Activated CD8-positive, alpha-beta T cell treated with anti-CD3 and anti-CD28 coated beads, Interleukin-2, amount 10 ng/mL, durations not matched to agents 7 days and 5 days (primary cell): ENCODE measurements at regions of chr3 and their contacts with region 1.

Region 1: GRCh38 chr3:100316641-100317069 is 17.9 kb upstream of the NIT2 start:
- DNase-seq: peak; percentile 66
- ATAC-seq: peak; percentile 82
- H3K4me3 Mint-ChIP-seq: no peak overlapping the region
- H3K27ac Mint-ChIP-seq: no peak overlapping the region
- H3K4me1 Mint-ChIP-seq: peaks cover 16% of the 10 kb centered on the region
- H3K27me3 Mint-ChIP-seq: no peaks in the 10 kb centered on the region

Region 2: GRCh38 chr3:100427699-100428098 is 111.0 kb after region 1 on chr3:
- CTCF ChIA-PET with region 1: no interaction called
- POLR2A ChIA-PET with region 1: no interaction called
- DNase-seq: no peak
- ATAC-seq: no peak
- H3K4me3 Mint-ChIP-seq: no peak overlapping the region
- H3K27ac Mint-ChIP-seq: no peak overlapping the region
- H3K4me1 Mint-ChIP-seq: no peaks in the 10 kb centered on the region
- H3K27me3 Mint-ChIP-seq: peaks cover 3% of the 10 kb centered on the region

Region 3: DNA sequence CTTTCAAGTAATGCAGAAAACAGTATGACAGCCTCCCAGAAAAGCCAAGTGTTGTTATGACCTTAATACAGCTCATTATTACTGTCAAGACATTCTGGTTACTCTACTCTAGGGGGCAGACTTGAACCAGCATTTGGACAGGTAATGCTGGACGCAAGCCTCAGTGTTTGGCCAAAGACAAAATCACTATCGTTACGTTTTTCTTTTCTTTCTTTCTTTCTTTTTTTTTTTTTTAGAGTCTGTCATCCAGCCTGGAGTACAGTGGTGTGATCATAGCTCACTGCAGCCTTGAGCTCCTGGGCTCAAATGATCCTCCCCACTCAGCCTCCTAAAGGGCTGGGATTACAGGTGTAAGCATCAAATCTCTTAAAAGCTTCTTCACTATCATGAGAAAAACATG is 146.3 kb after region 1 on chr3:
- CTCF ChIA-PET with region 1: interaction called, 15 read pairs
- POLR2A ChIA-PET with region 1: no interaction called
- DNase-seq: peak; percentile 50
- ATAC-seq: peak; percentile 87
- H3K4me3 Mint-ChIP-seq: no peak overlapping the region
- H3K27ac Mint-ChIP-seq: no peak overlapping the region
- H3K4me1 Mint-ChIP-seq: peaks cover 8% of the 10 kb centered on the region
- H3K27me3 Mint-ChIP-seq: peaks cover 3% of the 10 kb centered on the region